ENCODE measurements at regions of chr1 and their contacts with region 1.

Region 1: GRCh38 chr1:9629445-9630201 is 21.9 kb upstream of the PIK3CD start:
- DNase-seq: peak; percentile 70
- ATAC-seq: peak; percentile 43
- H3K4me3 Mint-ChIP-seq: peak overlapping the region; percentile 88
- H3K27ac Mint-ChIP-seq: peak overlapping the region; percentile 87
- H3K4me1 Mint-ChIP-seq: peaks cover 77% of the 10 kb centered on the region
- H3K27me3 Mint-ChIP-seq: no peaks in the 10 kb centered on the region
- CTCF ChIP-seq: no peak

Region 2: DNA sequence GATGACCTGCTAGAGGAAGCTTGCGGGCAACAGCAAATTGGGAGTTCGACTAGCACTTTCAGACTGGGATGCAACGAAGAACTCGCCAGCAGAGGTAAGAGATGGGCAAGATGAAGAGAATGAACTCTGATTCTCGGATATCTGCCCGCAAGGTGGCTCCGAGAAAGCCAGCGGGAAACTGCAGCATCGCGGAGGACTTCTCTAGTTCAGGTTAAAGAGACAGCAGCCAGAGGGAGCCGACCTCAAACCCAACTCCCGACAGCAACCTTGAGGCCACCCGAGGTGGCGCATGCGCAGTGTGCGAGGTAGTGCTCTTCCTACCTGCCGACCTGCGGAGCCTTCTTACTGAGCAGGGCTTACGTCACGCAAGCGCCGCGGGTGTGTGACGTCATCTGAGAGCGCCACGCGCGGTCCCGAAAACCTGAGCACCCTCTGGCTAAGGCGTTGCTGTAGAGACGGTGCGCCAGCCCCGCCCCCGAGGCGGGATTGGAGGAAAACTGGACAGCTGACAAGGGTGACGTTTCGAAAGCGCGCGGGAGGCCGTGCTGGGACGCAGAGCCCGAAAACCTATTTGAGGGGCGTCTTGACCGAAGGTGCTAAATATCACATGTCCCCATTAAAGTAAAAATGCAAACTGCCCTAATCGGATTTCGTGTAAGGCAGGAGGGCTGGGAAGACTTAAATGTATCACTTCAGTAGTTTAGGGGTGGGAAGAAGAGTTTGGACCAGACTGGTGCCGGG is 200.9 kb before region 1 on chr1:
- CTCF ChIA-PET with region 1: no interaction called
- POLR2A ChIA-PET with region 1: interaction called, 10 read pairs
- intact Hi-C with region 1: no loop called
- DNase-seq: peak; percentile 100
- ATAC-seq: peak; percentile 78
- H3K4me3 Mint-ChIP-seq: peak overlapping the region; percentile 95
- H3K27ac Mint-ChIP-seq: peak overlapping the region; percentile 97
- H3K4me1 Mint-ChIP-seq: peaks cover 59% of the 10 kb centered on the region
- H3K27me3 Mint-ChIP-seq: no peaks in the 10 kb centered on the region
- CTCF ChIP-seq: no peak

Region 3: DNA sequence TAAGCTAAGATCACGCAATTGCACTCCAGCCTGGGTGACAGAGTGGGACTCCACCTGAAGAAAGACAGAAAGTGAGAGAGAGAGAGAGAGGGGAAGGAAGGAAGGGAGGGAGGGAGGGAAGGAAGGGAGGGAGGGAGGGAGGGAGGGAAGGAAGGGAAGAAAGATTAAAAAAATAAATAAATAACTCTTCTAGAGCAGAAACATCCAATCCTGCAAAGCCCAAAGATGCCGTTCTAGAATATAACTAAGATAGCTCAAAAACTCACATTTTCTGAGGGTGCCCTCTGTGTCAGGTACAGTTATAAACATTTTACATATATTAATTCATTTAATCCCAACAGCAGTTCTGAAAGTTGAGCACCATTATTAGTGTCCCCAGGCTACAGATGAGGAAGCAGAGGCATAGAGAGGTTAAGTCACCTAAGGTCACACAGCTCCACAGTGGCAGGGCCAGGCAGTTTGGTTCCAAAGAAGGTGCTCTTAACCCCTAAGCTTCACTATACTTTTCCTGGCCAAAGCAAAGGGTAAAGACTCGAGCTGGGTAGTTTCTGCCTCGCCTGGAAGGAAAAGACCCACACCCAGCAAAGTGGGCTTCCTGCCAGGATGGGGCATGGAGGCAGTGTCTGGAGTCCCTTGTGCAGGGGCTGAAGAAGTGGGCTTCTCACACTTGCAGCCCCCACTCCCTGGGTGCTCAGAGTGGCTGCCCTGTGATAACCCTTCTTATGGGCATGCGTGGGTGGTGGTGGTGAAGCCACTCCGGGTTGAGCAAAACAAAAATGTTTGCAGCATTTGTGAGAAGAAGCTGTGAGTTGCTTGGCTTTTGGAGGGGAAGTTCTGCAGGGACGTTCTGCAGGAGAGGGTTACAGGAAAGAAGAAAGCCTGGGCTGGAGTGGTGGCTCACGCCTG is 14.0 kb after region 1 on chr1:
- CTCF ChIA-PET with region 1: interaction called, 20 read pairs
- POLR2A ChIA-PET with region 1: interaction called, 699 read pairs
- intact Hi-C with region 1: no loop called
- DNase-seq: no peak
- ATAC-seq: peak; percentile 37
- H3K4me3 Mint-ChIP-seq: peak overlapping the region; percentile 62
- H3K27ac Mint-ChIP-seq: peak overlapping the region; percentile 80
- H3K4me1 Mint-ChIP-seq: peaks cover 65% of the 10 kb centered on the region
- H3K27me3 Mint-ChIP-seq: no peaks in the 10 kb centered on the region
- CTCF ChIP-seq: no peak

Region 4: GRCh38 chr1:9671377-9672140 is 41.9 kb after region 1 on chr1:
- CTCF ChIA-PET with region 1: interaction called, 6 read pairs
- POLR2A ChIA-PET with region 1: interaction called, 15 read pairs
- intact Hi-C with region 1: no loop called
- DNase-seq: no peak
- ATAC-seq: no peak
- H3K4me3 Mint-ChIP-seq: no peak overlapping the region
- H3K27ac Mint-ChIP-seq: peak overlapping the region; percentile 57
- H3K4me1 Mint-ChIP-seq: peaks cover 67% of the 10 kb centered on the region
- H3K27me3 Mint-ChIP-seq: no peaks in the 10 kb centered on the region
- CTCF ChIP-seq: no peak

Region 5: GRCh38 chr1:9700340-9700739 is 70.7 kb after region 1 on chr1:
- CTCF ChIA-PET with region 1: interaction called, 10 read pairs
- POLR2A ChIA-PET with region 1: interaction called, 100 read pairs
- intact Hi-C with region 1: loop called (anchors 5 kb)
- DNase-seq: no peak
- ATAC-seq: no peak
- H3K4me3 Mint-ChIP-seq: no peak overlapping the region
- H3K27ac Mint-ChIP-seq: no peak overlapping the region
- H3K4me1 Mint-ChIP-seq: peaks cover 58% of the 10 kb centered on the region
- H3K27me3 Mint-ChIP-seq: no peaks in the 10 kb centered on the region
- CTCF ChIP-seq: no peak

Region 6: DNA sequence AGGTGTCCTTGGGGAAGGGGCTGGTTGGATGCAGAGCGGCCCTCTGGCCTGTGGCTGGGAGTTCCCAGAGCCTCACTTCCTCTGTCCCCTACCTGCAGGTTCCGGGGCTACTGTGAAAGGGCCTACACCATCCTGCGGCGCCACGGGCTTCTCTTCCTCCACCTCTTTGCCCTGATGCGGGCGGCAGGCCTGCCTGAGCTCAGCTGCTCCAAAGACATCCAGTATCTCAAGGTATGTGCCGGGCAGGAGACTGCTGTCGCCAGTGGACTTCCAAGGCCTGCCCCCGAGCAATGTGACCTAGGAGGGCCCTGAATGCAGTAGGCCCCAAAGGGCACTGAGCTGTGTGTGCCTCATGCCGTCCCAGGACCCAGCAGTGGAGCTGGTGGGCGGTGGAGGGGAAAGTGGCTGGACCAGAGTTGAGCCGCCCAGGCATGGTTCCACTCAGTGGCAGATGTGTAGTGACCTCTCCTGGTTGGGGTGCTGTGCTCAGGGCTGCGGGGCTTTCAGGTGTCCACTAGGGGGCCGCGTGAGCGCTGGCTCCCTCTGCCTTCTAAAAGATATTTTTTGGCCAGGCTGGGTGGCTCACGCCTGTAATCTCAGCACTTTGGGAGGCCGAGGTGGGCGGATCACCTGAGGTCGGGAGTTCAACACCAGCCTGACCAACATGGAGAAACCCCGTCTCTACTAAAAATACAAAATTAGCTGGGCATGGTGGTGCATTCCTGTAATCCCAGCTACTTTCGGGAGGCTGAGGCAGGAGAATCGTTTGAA is 95.3 kb after region 1 on chr1:
- CTCF ChIA-PET with region 1: interaction called, 24 read pairs
- POLR2A ChIA-PET with region 1: interaction called, 32 read pairs
- intact Hi-C with region 1: loop called (anchors 1 kb)
- DNase-seq: peak; percentile 62
- ATAC-seq: peak; percentile 70
- H3K4me3 Mint-ChIP-seq: no peak overlapping the region
- H3K27ac Mint-ChIP-seq: peak overlapping the region; percentile 74
- H3K4me1 Mint-ChIP-seq: peaks cover 21% of the 10 kb centered on the region
- H3K27me3 Mint-ChIP-seq: no peaks in the 10 kb centered on the region
- CTCF ChIP-seq: peak; percentile 62

Region 7: GRCh38 chr1:10032590-10033358 is 403.2 kb after region 1 on chr1 and contains the start of gene UBE4B:
- CTCF ChIA-PET with region 1: no interaction called
- POLR2A ChIA-PET with region 1: no interaction called
- intact Hi-C with region 1: loop called (anchors 10 kb)
- DNase-seq: peak; percentile 99
- ATAC-seq: peak; percentile 96
- H3K4me3 Mint-ChIP-seq: peak within 1 kb of the TSS; percentile 96
- H3K27ac Mint-ChIP-seq: peak within 1 kb of the TSS; percentile 93
- H3K4me1 Mint-ChIP-seq: peaks cover 24% of the 10 kb centered on the region
- H3K27me3 Mint-ChIP-seq: no peaks in the 10 kb centered on the region
- CTCF ChIP-seq: peak; percentile 55
- total RNA-seq, gene UBE4B: 41.1 and 44.7 TPM in 2 replicates

Measured in activated B cell treated with CpG ODN at 0.5 μM for 24 hours (primary cell).